ENCODE measurements at regions of chr10 and their contacts with region 1.

Region 1: DNA sequence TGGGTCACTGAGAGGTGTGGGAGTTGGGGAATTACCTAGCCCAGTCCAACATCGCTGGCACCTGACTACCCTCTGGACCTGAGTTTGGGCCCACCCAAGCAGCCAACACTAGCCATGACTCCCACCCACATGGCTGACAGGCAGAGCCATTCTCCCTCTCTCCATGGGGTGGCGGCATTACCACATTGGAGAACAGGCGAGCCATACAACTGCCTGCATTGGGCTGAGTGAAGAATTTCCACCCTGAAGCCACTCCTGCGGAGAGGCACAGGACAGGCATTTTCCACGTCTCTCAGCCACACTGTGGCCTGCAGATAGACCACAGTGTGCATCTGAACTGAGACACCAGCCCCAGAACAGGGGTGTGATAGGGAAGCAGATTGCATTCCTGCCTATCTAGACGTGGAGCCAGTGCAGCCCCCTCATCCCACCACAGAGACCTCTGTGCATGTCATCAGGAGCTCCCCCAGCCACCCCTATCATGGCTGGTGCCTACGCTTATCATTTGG is 58.2 kb upstream of the ANTXRL start:
- DNase-seq: peak; percentile 86 to 88
- H3K4me3 ChIP-seq: no peak overlapping the region
- H3K4me3 Mint-ChIP-seq: no peak overlapping the region
- H3K27ac Mint-ChIP-seq: no peak overlapping the region
- H3K4me1 ChIP-seq: peaks cover 10% of the 10 kb centered on the region
- H3K4me1 Mint-ChIP-seq: peaks cover 9% of the 10 kb centered on the region
- H3K27me3 ChIP-seq: no peaks in the 10 kb centered on the region
- H3K27me3 Mint-ChIP-seq: no peaks in the 10 kb centered on the region
- CTCF ChIP-seq: peak; percentile 92 to 95

Region 2: GRCh38 chr10:45235798-45236231 is 992.8 kb before region 1 on chr10:
- CTCF ChIA-PET with region 1: no interaction called
- POLR2A ChIA-PET with region 1: no interaction called
- intact Hi-C with region 1: loop called (anchors 5 kb)
- DNase-seq: no peak
- H3K4me3 ChIP-seq: no peak overlapping the region
- H3K4me3 Mint-ChIP-seq: no peak overlapping the region
- H3K27ac Mint-ChIP-seq: no peak overlapping the region
- H3K4me1 ChIP-seq: no peaks in the 10 kb centered on the region
- H3K4me1 Mint-ChIP-seq: no peaks in the 10 kb centered on the region
- H3K27me3 ChIP-seq: no peaks in the 10 kb centered on the region
- H3K27me3 Mint-ChIP-seq: peaks cover 11% of the 10 kb centered on the region
- CTCF ChIP-seq: no peak

Region 3: DNA sequence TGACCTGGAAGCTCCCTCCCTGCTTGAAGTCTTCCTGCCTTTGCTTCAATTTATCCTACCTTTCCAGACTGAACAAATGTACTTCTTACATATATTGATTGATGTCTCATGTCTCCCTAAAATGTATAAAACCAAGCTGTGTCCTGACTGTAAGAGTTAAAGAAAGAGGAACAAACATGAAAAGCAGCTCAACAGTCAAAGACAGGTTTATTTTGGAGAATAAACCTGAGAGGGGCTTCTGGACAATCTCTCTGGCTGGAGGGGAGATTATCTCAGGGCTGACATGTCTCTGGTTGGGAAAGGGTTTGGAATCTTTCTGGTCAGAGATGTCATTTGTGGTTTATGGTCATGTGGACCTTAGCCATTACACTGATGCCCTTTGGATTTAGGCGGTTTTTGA is 954.3 kb before region 1 on chr10:
- CTCF ChIA-PET with region 1: no interaction called
- POLR2A ChIA-PET with region 1: no interaction called
- intact Hi-C with region 1: no loop called
- DNase-seq: no peak
- H3K4me3 ChIP-seq: no peak overlapping the region
- H3K4me3 Mint-ChIP-seq: no peak overlapping the region
- H3K27ac Mint-ChIP-seq: no peak overlapping the region
- H3K4me1 ChIP-seq: no peaks in the 10 kb centered on the region
- H3K4me1 Mint-ChIP-seq: no peaks in the 10 kb centered on the region
- H3K27me3 ChIP-seq: no peaks in the 10 kb centered on the region
- H3K27me3 Mint-ChIP-seq: peaks cover 4% of the 10 kb centered on the region
- CTCF ChIP-seq: no peak

Region 4: DNA sequence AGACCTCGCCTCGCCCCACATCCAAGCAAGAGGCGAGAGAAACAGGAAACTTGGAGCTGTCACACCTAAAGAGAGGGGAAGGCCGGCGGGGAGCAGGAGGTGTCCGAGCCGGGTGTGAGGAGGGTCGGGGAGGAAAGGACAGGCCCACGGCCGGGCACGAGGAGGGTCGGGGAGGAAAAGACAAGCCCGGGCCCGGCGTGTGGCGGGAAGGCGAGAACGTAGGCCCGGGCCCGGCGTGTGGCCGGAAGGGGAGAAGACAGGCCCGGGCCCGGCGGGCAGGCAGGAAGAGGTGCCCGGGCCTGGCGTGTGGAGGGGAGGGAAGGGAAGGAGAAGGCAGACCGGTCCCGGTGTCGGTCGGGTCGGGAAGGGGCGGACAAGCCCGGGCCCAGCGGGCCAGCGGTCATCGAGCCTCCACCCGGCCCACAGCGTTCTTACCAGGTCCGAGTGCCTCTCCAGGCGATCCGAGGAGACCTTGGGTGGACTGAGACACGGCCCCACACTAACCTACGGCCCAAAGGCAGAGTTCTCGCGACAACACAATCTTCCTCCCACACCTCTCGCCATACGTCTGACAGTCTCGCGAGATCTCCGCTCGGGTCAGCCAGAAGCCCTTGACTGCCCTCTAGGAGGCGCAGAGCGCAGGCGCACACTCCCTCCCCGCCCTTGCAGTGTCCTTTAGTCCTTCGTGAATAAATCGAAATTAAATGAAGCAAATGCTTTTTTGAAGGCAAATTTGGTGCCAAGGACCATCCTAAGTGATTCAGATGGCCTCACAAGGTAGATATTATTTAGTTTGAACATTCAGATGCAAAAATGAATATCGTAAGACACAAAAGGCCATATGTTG is 198.3 kb before region 1 on chr10 and contains the start of gene NCOA4:
- CTCF ChIA-PET with region 1: interaction called, 11 read pairs
- POLR2A ChIA-PET with region 1: no interaction called
- intact Hi-C with region 1: loop called (anchors 10 kb)
- DNase-seq: peak; percentile 99
- H3K4me3 ChIP-seq: peak within 1 kb of the TSS; percentile 95
- H3K4me3 Mint-ChIP-seq: peak within 1 kb of the TSS; percentile 100
- H3K27ac Mint-ChIP-seq: peak within 1 kb of the TSS; percentile 98
- H3K4me1 ChIP-seq: peaks cover 49% of the 10 kb centered on the region
- H3K4me1 Mint-ChIP-seq: peaks cover 45% of the 10 kb centered on the region
- H3K27me3 ChIP-seq: no peaks in the 10 kb centered on the region
- H3K27me3 Mint-ChIP-seq: no peaks in the 10 kb centered on the region
- CTCF ChIP-seq: peak; percentile 87 to 98
- total RNA-seq, gene NCOA4: 139 and 142 TPM in 2 replicates

Region 5: GRCh38 chr10:46239247-46239646 is 10.6 kb after region 1 on chr10:
- CTCF ChIA-PET with region 1: no interaction called
- POLR2A ChIA-PET with region 1: no interaction called
- intact Hi-C with region 1: no loop called
- DNase-seq: no peak
- H3K4me3 ChIP-seq: no peak overlapping the region
- H3K4me3 Mint-ChIP-seq: no peak overlapping the region
- H3K27ac Mint-ChIP-seq: no peak overlapping the region
- H3K4me1 ChIP-seq: no peaks in the 10 kb centered on the region
- H3K4me1 Mint-ChIP-seq: no peaks in the 10 kb centered on the region
- H3K27me3 ChIP-seq: no peaks in the 10 kb centered on the region; the same call in 1 of the 2 replicates
- H3K27me3 Mint-ChIP-seq: peaks cover 14% of the 10 kb centered on the region
- CTCF ChIP-seq: no peak

Region 6: DNA sequence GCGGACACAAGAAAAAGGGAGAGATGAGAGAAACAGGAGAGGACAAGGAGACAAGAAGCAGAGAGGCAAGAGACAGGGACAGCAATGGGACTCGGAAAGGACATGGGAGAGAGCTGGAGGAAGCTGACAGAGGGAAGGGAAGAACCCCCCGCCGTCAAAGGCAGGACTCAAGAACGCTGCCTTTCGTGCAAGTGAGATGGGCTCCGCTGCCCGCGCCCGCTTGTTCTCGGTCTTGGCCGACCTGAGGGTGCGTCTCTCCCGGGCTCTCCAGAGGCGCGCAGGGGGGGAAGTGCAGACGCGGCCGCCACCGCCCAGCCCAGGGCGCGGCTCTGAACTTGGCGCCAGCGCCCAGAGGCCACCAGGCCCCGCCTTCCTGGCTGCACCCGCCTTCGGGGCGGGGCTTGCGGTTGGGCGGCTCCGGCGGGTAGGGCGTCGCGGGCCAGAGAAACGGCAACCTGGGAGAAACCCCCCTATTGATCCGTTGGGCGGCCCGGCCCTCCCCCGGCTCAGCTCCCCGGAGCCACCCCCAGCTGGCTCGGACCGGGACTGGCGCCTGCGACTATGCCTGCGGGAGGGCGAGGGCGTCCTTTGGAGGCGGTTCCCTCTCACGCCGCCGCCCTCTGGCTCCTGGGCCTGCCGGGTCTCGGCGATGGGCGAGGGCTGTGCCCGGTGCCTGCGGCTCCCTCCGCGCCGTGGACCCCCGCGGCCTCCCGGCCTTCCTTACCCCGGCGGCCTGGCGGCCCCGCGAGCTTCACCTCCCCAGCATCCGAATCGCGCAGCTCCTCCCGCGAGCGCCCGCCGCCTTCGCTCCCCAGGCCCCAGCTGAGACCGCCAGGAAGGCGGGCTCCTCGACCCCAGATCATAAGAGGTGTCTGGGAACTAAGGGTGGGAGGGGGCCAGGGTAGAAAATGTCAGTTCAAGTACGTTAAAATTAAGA is 55.9 kb after region 1 on chr10:
- CTCF ChIA-PET with region 1: no interaction called
- POLR2A ChIA-PET with region 1: no interaction called
- intact Hi-C with region 1: loop called (anchors 5 kb)
- DNase-seq: peak; percentile 72 to 88
- H3K4me3 ChIP-seq: peak overlapping the region; percentile 63
- H3K4me3 Mint-ChIP-seq: peak overlapping the region; percentile 81
- H3K27ac Mint-ChIP-seq: peak overlapping the region; percentile 16
- H3K4me1 ChIP-seq: 0 out of 2 replicates have a peak, but pooled peaks cover 3% of the 10 kb centered on the region
- H3K4me1 Mint-ChIP-seq: peaks cover 7% of the 10 kb centered on the region
- H3K27me3 ChIP-seq: peaks cover 2% of the 10 kb centered on the region
- H3K27me3 Mint-ChIP-seq: peaks cover 13% of the 10 kb centered on the region
- CTCF ChIP-seq: no peak

Region 7: DNA sequence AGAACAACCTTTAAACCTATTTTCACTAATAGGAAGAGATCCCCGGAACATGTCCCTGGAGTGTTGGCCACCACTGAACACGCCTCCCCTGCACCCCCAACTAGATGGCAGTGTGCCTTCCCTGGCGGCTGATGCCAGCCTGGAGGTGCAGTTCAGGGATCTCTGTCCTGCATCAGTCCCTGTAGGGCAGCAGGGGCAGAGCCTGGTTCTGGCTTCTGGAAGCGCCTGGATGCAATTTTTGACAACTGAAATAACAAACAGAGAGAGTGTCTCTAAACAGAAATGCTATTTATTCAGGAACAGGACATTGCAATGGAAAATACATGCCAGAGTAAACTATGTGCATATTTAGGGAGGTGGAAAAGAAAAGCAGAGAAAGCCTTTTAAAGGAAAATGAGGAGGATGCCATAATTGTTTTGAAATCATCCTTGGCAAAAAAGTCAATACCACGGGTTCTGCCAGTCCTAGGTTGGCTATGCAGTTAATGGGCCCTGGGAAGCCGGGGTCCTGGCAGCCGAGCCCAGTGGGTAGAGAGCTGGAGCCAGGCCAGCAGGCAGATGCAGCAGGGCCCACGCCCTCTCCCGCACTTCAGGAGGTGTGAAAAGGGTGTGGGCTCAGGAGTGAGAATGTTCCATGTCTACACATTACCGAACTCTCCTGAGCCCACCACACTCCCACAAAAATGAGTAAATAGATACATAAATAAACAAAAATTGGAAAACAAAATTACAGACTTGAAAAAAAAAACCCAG is 76.6 kb after region 1 on chr10:
- CTCF ChIA-PET with region 1: no interaction called
- POLR2A ChIA-PET with region 1: no interaction called
- intact Hi-C with region 1: no loop called
- DNase-seq: no peak
- H3K4me3 ChIP-seq: no peak overlapping the region
- H3K4me3 Mint-ChIP-seq: no peak overlapping the region
- H3K27ac Mint-ChIP-seq: no peak overlapping the region
- H3K4me1 ChIP-seq: no peaks in the 10 kb centered on the region
- H3K4me1 Mint-ChIP-seq: no peaks in the 10 kb centered on the region
- H3K27me3 ChIP-seq: no peaks in the 10 kb centered on the region
- H3K27me3 Mint-ChIP-seq: no peaks in the 10 kb centered on the region
- CTCF ChIP-seq: no peak

Region 8: DNA sequence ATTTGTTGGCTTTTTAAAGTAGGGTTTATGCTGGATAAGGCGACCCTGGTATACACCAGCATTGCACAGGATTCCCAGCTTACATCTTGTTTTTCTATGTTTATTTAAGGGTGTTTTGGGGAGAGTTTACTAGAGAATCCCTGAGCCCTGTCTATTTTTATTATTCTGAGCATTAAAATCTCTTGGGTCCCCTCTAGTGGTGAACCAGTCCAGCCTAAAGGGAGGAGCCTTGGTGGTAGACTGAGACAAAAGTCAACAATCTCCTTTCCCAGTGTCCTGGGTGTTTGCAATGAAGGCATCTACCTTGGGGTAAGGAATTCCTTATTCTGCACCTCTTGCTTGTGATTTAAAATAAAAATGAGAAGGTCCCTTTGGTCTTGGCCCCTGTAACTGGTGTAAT is 96.4 kb after region 1 on chr10:
- CTCF ChIA-PET with region 1: no interaction called
- POLR2A ChIA-PET with region 1: no interaction called
- intact Hi-C with region 1: loop called (anchors 5 kb)
- DNase-seq: no peak
- H3K4me3 ChIP-seq: no peak overlapping the region
- H3K4me3 Mint-ChIP-seq: no peak overlapping the region
- H3K27ac Mint-ChIP-seq: no peak overlapping the region
- H3K4me1 ChIP-seq: no peaks in the 10 kb centered on the region
- H3K4me1 Mint-ChIP-seq: no peaks in the 10 kb centered on the region
- H3K27me3 ChIP-seq: no peaks in the 10 kb centered on the region
- H3K27me3 Mint-ChIP-seq: no peaks in the 10 kb centered on the region
- CTCF ChIP-seq: peak; percentile 41 to 64